Common myeloid progenitor, CD34-positive (primary cell): ENCODE measurements at regions of chr17 and their contacts with region 1.

Region 1: GRCh38 chr17:68398691-68399637 is 58.3 kb downstream of the WIPI1 start:
- DNase-seq: peak; percentile 39 to 42 (median 39)
- H3K4me3 ChIP-seq: no peak overlapping the region
- H3K27ac ChIP-seq: no peak overlapping the region
- H3K4me1 ChIP-seq: peaks cover 0 to 14% (median 6%) of the 10 kb centered on the region in 4 experiments
- H3K27me3 ChIP-seq: peaks cover 0 to 2% (median 0%) of the 10 kb centered on the region in 5 experiments

Region 2: DNA sequence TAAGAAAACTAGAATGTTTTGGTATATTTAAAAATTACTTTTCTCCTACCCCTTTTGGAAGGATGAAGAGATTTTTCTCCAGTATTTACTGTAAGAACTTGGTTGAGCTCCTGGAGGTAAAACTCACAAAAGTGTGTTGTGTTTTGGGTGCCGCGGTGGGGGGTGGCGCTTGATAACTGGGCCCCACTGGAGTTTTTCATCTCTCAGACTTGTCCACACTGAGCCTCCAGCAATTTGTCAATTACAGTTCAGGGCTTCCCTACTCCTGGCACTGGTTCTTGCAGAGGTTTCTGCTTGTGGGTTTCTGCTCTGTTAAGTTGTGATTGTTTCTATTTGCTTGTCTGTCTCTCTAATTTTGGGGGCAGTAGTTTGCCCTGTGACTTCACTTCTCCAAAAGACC is 18.4 kb after region 1 on chr17:
- CTCF ChIA-PET with region 1: interaction called, 13 read pairs
- POLR2A ChIA-PET with region 1: no interaction called
- DNase-seq: no peak
- H3K4me3 ChIP-seq: no peak overlapping the region
- H3K27ac ChIP-seq: no peak overlapping the region
- H3K4me1 ChIP-seq: peaks cover 0 to 3% (median 0%) of the 10 kb centered on the region in 4 experiments
- H3K27me3 ChIP-seq: no peaks in the 10 kb centered on the region

Region 3: GRCh38 chr17:68491381-68492231 is 92.6 kb after region 1 on chr17:
- CTCF ChIA-PET with region 1: no interaction called
- POLR2A ChIA-PET with region 1: no interaction called
- DNase-seq: peak in 2 of 3 donors; percentile 31 to 34
- H3K4me3 ChIP-seq: no peak overlapping the region
- H3K27ac ChIP-seq: no peak overlapping the region
- H3K4me1 ChIP-seq: peaks cover 2 to 28% (median 22%) of the 10 kb centered on the region in 4 experiments
- H3K27me3 ChIP-seq: no peaks in the 10 kb centered on the region